Heart left ventricle (tissue), 16 donors: ENCODE measurements at regions of chr4 and their contacts with region 1.

Region 1: GRCh38 chr4:7802093-7802726 is 137.5 kb downstream of the AFAP1 start:
- DNase-seq: peak in 4 of 5 donors; percentile 72 to 82 (median 80)
- ATAC-seq: peak; percentile 39 to 68 (median 50)
- H3K4me3 ChIP-seq: no peak overlapping the region
- H3K27ac ChIP-seq: no peak overlapping the region
- H3K4me1 ChIP-seq: peaks cover 0 to 42% (median 29%) of the 10 kb centered on the region in 12 donors
- H3K27me3 ChIP-seq: no peaks in the 10 kb centered on the region
- CTCF ChIP-seq: peak; percentile 87 to 96 (median 94)
- POLR2A ChIP-seq: no peak

Region 2: GRCh38 chr4:6779667-6780555 is 1022.3 kb before region 1 on chr4:
- intact Hi-C with region 1: no loop called
- DNase-seq: no peak
- ATAC-seq: no peak
- H3K4me3 ChIP-seq: no peak overlapping the region
- H3K27ac ChIP-seq: peak overlapping the region in 8 of 12 donors; percentile 19 to 100 (median 99)
- H3K4me1 ChIP-seq: peaks cover 0 to 34% (median 21%) of the 10 kb centered on the region in 12 donors
- H3K27me3 ChIP-seq: no peaks in the 10 kb centered on the region
- CTCF ChIP-seq: no peak
- POLR2A ChIP-seq: no peak

Region 3: GRCh38 chr4:7673121-7673520 is 129.1 kb before region 1 on chr4:
- intact Hi-C with region 1: no loop called
- DNase-seq: no peak
- ATAC-seq: no peak
- H3K4me3 ChIP-seq: no peak overlapping the region
- H3K27ac ChIP-seq: no peak overlapping the region
- H3K4me1 ChIP-seq: no peaks in the 10 kb centered on the region
- H3K27me3 ChIP-seq: peaks cover 0 to 6% (median 0%) of the 10 kb centered on the region in 9 donors
- CTCF ChIP-seq: no peak
- POLR2A ChIP-seq: no peak

Region 4: DNA sequence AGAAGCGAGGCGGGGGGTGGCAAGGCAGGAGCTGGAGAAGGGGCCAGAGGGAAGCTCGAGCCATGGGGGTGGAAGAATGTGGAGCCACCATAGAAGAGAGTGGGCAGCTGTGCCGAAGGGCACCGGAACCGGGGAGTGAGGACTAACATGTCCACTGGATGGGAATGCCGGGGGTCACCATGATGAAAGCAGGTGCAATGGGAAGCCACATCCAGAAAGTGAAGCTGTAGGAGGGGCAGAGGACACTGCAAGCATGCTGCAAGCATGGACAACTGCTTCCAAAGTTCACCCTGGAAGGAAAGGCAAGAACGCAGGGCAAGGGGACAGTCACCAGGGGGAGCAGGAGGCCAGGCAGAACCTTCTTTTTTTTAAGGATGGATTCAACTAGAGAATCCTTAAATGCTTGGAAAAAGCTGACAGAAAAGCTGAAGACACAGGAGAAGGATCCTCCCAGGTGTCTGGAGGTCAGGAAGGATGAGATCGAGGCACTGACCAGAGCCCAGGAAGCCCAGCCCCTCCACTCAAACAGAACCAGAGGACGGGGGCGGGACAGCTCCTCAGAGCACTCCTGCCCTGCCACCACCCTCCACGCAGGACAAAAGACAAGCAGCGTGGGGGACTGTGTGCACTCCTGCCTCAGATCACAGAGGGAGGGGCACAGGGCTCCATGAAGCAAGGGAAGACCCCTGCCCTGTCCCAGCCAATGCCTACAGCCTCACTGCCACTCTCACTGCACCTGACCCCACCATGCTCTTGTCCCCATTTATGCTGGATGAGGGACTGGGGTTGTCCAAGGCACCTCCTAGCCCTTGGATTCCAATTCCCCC is 31.8 kb before region 1 on chr4:
- intact Hi-C with region 1: loop called in 3 of 10 experiments (anchors 1 to 2 kb)
- DNase-seq: peak in 1 of 5 donors; percentile 23
- ATAC-seq: no peak
- H3K4me3 ChIP-seq: no peak overlapping the region
- H3K27ac ChIP-seq: no peak overlapping the region
- H3K4me1 ChIP-seq: peaks cover 0 to 10% (median 0%) of the 10 kb centered on the region in 12 donors
- H3K27me3 ChIP-seq: no peaks in the 10 kb centered on the region
- CTCF ChIP-seq: peak; percentile 32 to 67 (median 52)
- POLR2A ChIP-seq: no peak

Region 5: GRCh38 chr4:7843831-7844593 is 41.8 kb after region 1 on chr4:
- intact Hi-C with region 1: loop called in 7 of 10 experiments (anchors 1 to 5 kb)
- DNase-seq: peak; percentile 72 to 82 (median 76)
- ATAC-seq: peak in 3 of 4 donors; percentile 61 to 68 (median 62)
- H3K4me3 ChIP-seq: no peak overlapping the region
- H3K27ac ChIP-seq: peak overlapping the region in 10 of 12 donors; percentile 14 to 85 (median 74)
- H3K4me1 ChIP-seq: peaks cover 0 to 41% (median 15%) of the 10 kb centered on the region in 12 donors
- H3K27me3 ChIP-seq: no peaks in the 10 kb centered on the region
- CTCF ChIP-seq: peak; percentile 48 to 70 (median 60)
- POLR2A ChIP-seq: no peak

Region 6: GRCh38 chr4:7987148-7987989 is 185.2 kb after region 1 on chr4:
- intact Hi-C with region 1: loop called (anchors 1 to 2 kb)
- DNase-seq: peak; percentile 64 to 72 (median 67)
- ATAC-seq: peak; percentile 46 to 79 (median 75)
- H3K4me3 ChIP-seq: no peak overlapping the region
- H3K27ac ChIP-seq: no peak overlapping the region
- H3K4me1 ChIP-seq: peaks cover 0 to 13% (median 7%) of the 10 kb centered on the region in 12 donors
- H3K27me3 ChIP-seq: no peaks in the 10 kb centered on the region
- CTCF ChIP-seq: peak; percentile 75 to 93 (median 86)
- POLR2A ChIP-seq: no peak

Region 7: DNA sequence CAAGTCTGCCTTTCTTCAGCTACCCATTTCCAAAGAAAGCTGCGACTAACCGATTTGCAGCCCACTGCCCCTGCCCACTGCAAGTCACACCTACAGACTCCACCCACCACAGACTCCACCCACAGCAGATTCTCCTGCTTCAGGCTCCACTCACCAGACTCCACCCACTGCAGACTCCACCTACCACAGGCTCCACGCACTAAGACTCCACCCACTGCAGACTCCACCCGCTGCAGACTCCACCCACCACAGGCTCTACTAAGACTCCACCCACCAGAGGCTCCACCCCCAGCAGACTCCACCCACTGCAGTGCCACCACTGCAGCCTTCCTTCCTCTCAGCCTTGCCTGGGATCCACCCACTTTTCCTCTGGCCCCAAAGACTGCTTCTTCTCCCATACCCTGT is 315.1 kb after region 1 on chr4:
- intact Hi-C with region 1: no loop called
- DNase-seq: peak in 4 of 5 donors; percentile 35 to 65 (median 54)
- ATAC-seq: peak; percentile 41 to 69 (median 65)
- H3K4me3 ChIP-seq: no peak overlapping the region
- H3K27ac ChIP-seq: peak overlapping the region in 4 of 12 donors; percentile 46 to 62 (median 54)
- H3K4me1 ChIP-seq: peaks cover 0 to 50% (median 28%) of the 10 kb centered on the region in 12 donors
- H3K27me3 ChIP-seq: no peaks in the 10 kb centered on the region
- CTCF ChIP-seq: no peak
- POLR2A ChIP-seq: no peak